ENCODE measurements at regions of chr13 and their contacts with region 1.

Region 1: DNA sequence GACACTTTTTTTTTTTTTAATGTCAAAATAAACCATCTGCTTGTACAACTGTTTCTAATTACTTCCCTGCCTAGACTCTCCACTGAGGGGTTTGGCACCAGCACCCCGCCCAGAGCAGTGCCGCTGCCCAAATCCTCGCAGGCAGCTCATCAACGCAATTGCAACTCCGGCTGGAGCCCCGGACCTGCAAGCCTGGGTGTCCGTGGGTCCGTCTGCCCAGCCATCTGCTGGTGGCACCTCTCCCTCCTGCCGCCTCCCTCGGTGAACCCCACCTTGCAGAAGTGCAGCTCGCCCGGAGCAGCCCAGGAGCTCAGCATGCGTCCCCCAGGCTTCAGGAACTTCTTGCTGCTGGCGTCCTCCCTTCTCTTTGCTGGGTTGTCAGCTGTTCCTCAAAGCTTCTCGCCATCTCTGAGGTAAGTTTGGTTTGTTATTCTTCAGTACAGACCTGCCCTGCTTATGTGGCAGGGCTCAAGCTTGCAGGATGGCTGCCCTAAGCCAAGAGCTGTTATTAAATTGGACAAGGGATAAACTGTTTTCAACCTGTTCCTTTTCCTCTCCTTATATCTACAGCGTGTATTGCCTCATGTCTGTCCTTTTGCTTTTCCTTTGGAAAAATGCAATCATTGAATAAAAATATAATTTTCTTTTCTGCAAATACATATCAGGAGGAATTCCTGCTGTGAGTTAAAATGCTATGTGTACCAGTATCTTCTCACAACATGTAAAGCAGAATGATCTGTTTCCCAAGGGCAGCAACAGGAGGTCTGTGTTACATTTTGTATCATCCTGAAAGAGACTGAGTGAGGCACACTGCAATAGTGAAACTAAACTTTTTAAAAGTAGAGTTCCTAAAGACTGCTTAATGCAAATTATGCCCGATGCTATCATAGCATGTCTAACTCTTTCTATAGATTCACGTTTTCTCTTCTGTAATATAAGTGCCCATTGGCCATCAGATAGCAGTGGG is at the start of gene ITGBL1:
- DNase-seq: peak; percentile 25
- ATAC-seq: peak; percentile 8
- H3K4me3 ChIP-seq: peak within 1 kb of the TSS; percentile 50
- H3K27ac ChIP-seq: peak within 1 kb of the TSS; percentile 74
- H3K4me1 ChIP-seq: peaks cover 35% of the 10 kb centered on the region
- H3K27me3 ChIP-seq: no peaks in the 10 kb centered on the region
- CTCF ChIP-seq: no peak
- POLR2A ChIP-seq: no peak
- RAD21 ChIP-seq: no peak
- total RNA-seq, gene ITGBL1: 22.2 and 46.7 TPM in 2 replicates

Region 2: DNA sequence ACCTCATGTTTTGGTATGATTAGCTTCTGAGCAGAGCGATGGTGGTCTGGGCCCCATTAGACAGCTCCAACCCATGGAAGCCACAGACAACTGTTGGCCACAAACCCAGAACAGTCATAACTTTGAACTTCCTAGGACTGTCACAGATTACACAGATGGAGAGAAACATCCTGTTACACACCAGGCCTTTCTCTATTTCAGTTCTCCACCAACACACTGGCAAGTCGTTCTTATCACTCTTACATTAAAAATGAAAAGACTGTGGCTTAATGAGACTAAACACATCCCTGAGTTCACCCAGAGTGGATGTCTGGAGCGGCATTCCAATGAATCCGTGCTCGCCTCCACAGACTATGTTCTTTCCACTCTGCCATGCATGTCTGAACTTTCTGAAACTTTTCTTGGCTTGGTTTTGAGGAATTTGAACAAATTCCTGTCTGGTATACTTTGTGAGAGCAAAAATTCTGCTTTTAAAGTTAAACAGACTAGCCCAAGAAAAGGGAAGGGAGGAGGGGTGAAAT is 145.6 kb before region 1 on chr13:
- CTCF ChIA-PET with region 1: no interaction called
- POLR2A ChIA-PET with region 1: no interaction called
- dilution Hi-C with region 1: no loop called
- in situ Hi-C with region 1: no loop called
- intact Hi-C with region 1: loop called (anchors 2 kb)
- DNase-seq: peak; percentile 90
- ATAC-seq: peak; percentile 90
- H3K4me3 ChIP-seq: no peak overlapping the region
- H3K27ac ChIP-seq: peak overlapping the region; percentile 19; the same call in 1 of the 2 replicates
- H3K4me1 ChIP-seq: peaks cover 19% of the 10 kb centered on the region
- H3K27me3 ChIP-seq: no peaks in the 10 kb centered on the region
- CTCF ChIP-seq: no peak
- POLR2A ChIP-seq: no peak
- RAD21 ChIP-seq: no peak

Region 3: GRCh38 chr13:101416174-101417042 is 36.4 kb before region 1 on chr13 and contains the start of gene NALCN:
- CTCF ChIA-PET with region 1: no interaction called
- POLR2A ChIA-PET with region 1: no interaction called
- dilution Hi-C with region 1: no loop called
- in situ Hi-C with region 1: no loop called
- intact Hi-C with region 1: loop called (anchors 5 kb)
- DNase-seq: no peak
- ATAC-seq: peak; percentile 92
- H3K4me3 ChIP-seq: peak within 1 kb of the TSS; percentile 65
- H3K27ac ChIP-seq: peak within 1 kb of the TSS; percentile 20; the same call in 1 of the 2 replicates
- H3K4me1 ChIP-seq: peaks cover 2% of the 10 kb centered on the region; the same call in 1 of the 2 replicates
- H3K27me3 ChIP-seq: no peaks in the 10 kb centered on the region
- CTCF ChIP-seq: no peak
- POLR2A ChIP-seq: no peak
- RAD21 ChIP-seq: no peak
- total RNA-seq, gene NALCN: 4.8 and 5.6 TPM in 2 replicates

Region 4: DNA sequence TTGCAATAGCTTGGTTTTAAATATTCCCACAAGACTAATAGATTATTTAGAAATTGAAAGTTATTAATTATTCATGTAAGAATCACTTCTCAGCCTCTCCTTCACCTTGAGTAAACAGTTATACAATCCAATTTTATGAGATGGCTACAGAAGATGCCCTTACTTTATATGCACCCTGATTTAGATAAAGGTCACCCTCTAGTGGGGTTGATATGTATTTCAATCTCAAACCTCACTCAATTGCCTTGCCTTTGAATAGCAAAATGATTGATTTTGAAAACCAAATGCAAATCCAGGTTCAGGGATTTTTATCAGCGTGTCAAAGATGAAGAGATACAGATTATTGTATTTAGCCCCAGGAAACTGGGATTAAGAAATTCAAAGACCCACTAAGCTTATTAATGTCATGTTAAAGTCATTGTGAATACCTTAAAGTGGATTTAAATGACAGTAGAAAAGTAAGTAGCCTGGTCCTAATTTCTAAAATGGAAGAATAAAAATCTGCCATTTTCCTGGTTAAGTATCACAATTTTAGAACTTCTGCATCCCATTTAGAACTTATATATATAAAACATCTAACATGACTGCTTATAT is 304.7 kb after region 1 on chr13:
- CTCF ChIA-PET with region 1: no interaction called
- POLR2A ChIA-PET with region 1: interaction called, 3 read pairs
- dilution Hi-C with region 1: no loop called
- in situ Hi-C with region 1: no loop called
- intact Hi-C with region 1: loop called (anchors 2 kb)
- DNase-seq: peak; percentile 50
- ATAC-seq: peak; percentile 73; the same call in 1 of the 2 replicates
- H3K4me3 ChIP-seq: no peak overlapping the region
- H3K27ac ChIP-seq: no peak overlapping the region
- H3K4me1 ChIP-seq: no peaks in the 10 kb centered on the region
- H3K27me3 ChIP-seq: peaks cover 2% of the 10 kb centered on the region; the same call in 1 of the 2 replicates
- CTCF ChIP-seq: peak; percentile 73
- POLR2A ChIP-seq: no peak
- RAD21 ChIP-seq: peak; percentile 80

Region 5: GRCh38 chr13:102286326-102286725 is 833.5 kb after region 1 on chr13:
- CTCF ChIA-PET with region 1: no interaction called
- POLR2A ChIA-PET with region 1: no interaction called
- dilution Hi-C with region 1: no loop called
- in situ Hi-C with region 1: no loop called
- intact Hi-C with region 1: loop called (anchors 10 kb)
- DNase-seq: peak; percentile 96
- ATAC-seq: peak; percentile 93
- H3K4me3 ChIP-seq: no peak overlapping the region
- H3K27ac ChIP-seq: peak overlapping the region; percentile 82
- H3K4me1 ChIP-seq: peaks cover 2% of the 10 kb centered on the region; the same call in 1 of the 2 replicates
- H3K27me3 ChIP-seq: peaks cover 3% of the 10 kb centered on the region; the same call in 1 of the 2 replicates
- CTCF ChIP-seq: no peak
- POLR2A ChIP-seq: no peak
- RAD21 ChIP-seq: no peak